Right ventricle myocardium superior (tissue), 1 donor: ENCODE measurements at regions of chr15 and their contacts with region 1.

Region 1: GRCh38 chr15:49235446-49236124 is 65.5 kb downstream of the GALK2 start:
- DNase-seq: no peak
- ATAC-seq: peak; percentile 89

Region 2: DNA sequence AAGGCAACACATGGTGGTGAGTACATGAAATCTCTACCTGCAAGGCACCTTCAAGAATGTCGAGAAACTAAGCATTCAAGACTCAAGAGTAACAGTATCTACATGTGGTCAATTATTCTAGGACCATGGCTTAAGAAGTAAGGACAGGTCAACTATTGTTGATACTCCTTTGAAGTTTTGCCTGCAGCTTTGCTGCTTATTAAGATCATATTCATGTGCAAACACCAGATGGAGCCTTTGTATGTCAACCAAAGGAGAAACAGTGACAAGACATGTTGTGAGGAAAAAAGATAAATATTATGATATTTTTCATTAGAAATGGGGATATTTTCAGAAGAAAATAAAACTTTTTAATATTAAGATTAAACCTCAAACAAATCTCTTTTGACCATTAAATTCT is 135.2 kb after region 1 on chr15:
- intact Hi-C with region 1: no loop called
- DNase-seq: no peak
- ATAC-seq: no peak

Region 3: DNA sequence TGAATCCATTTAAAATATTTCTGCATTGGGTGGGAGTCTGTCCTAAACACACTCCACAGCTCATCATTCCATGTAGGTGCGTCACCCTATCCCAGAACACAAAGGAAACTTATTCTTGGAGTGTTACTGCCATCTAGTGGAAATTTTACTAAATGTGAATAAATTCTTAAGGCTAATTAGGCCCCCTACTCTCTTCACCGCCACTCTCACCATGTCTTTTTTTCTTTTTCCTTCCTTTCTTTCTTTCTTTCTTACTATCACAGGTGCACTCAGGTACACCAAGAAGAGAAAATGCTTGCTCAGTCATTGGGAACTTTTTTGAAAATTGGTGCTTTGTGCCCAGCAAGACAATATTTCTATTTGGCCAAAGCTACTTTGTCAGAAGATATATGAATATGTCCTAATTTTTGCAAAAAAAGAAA is 909.9 kb after region 1 on chr15:
- intact Hi-C with region 1: loop called (anchors 10 kb)
- DNase-seq: no peak
- ATAC-seq: peak; percentile 83